ENCODE measurements at regions of chr22 and their contacts with region 1.

Region 1: GRCh38 chr22:17972385-17973181 is 51.8 kb downstream of the MICAL3 start:
- DNase-seq: no peak
- ATAC-seq: no peak
- H3K4me3 ChIP-seq: no peak overlapping the region
- H3K4me3 Mint-ChIP-seq: no peak overlapping the region
- H3K27ac ChIP-seq: peak overlapping the region in 1 of 2 donors; percentile 35
- H3K27ac Mint-ChIP-seq: peak overlapping the region; percentile 46
- H3K4me1 ChIP-seq: peaks cover 45 to 62% of the 10 kb centered on the region in 2 donors
- H3K4me1 Mint-ChIP-seq: peaks cover 79% of the 10 kb centered on the region
- H3K27me3 ChIP-seq: no peaks in the 10 kb centered on the region
- H3K27me3 Mint-ChIP-seq: no peaks in the 10 kb centered on the region
- CTCF ChIP-seq: no peak

Region 2: DNA sequence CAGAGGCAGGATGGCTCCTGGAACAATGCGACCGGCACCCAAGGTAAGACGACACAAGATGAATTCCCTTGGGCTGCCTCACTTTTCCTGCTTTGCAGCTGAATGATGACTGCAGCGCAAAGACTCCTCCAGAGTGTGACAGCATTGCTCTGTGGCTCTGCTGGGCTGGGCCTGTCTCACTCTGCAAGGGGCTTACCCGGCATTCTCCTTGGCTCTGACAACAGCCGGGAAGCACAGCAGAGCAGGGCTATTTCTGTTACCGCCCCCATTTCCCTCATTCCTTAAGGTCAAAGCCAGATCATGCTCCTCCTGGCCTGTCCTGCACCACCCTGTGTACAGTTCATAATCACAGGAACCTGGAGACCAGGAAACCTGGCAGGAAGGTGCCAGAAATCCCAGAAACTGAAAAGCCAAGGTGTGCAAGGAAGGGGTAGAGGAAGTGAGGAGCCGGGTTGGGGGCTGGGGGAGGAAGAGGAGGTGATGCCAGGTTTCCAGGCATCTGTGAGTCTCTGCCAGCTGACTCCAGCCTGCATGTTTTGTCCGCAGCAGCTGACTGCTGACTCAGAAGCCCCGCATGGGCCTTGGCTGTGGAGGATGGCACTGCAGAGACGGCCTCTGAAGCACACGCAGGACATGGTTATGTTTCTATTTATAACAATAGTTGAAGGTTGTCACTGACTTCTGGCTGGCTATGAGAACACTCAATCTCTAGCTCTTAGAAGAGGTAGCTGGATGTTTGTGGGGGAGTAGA is 61.8 kb before region 1 on chr22:
- CTCF ChIA-PET with region 1: no interaction called
- POLR2A ChIA-PET with region 1: no interaction called
- intact Hi-C with region 1: loop called (anchors 10 kb)
- DNase-seq: no peak
- ATAC-seq: no peak
- H3K4me3 ChIP-seq: no peak overlapping the region
- H3K4me3 Mint-ChIP-seq: no peak overlapping the region
- H3K27ac ChIP-seq: peak overlapping the region in 1 of 2 donors; percentile 37
- H3K27ac Mint-ChIP-seq: peak overlapping the region; percentile 11
- H3K4me1 ChIP-seq: peaks cover 0 to 25% of the 10 kb centered on the region in 2 donors
- H3K4me1 Mint-ChIP-seq: peaks cover 72% of the 10 kb centered on the region
- H3K27me3 ChIP-seq: no peaks in the 10 kb centered on the region
- H3K27me3 Mint-ChIP-seq: no peaks in the 10 kb centered on the region
- CTCF ChIP-seq: no peak

Region 3: GRCh38 chr22:17938484-17938924 is 34.1 kb before region 1 on chr22:
- CTCF ChIA-PET with region 1: no interaction called
- POLR2A ChIA-PET with region 1: no interaction called
- intact Hi-C with region 1: loop called (anchors 5 kb)
- DNase-seq: no peak
- ATAC-seq: no peak
- H3K4me3 ChIP-seq: no peak overlapping the region
- H3K4me3 Mint-ChIP-seq: no peak overlapping the region
- H3K27ac ChIP-seq: peak overlapping the region in 1 of 2 donors; percentile 16
- H3K27ac Mint-ChIP-seq: peak overlapping the region; percentile 57
- H3K4me1 ChIP-seq: peaks cover 50 to 54% of the 10 kb centered on the region in 2 donors
- H3K4me1 Mint-ChIP-seq: peaks cover 87% of the 10 kb centered on the region
- H3K27me3 ChIP-seq: no peaks in the 10 kb centered on the region
- H3K27me3 Mint-ChIP-seq: no peaks in the 10 kb centered on the region
- CTCF ChIP-seq: no peak

Region 4: DNA sequence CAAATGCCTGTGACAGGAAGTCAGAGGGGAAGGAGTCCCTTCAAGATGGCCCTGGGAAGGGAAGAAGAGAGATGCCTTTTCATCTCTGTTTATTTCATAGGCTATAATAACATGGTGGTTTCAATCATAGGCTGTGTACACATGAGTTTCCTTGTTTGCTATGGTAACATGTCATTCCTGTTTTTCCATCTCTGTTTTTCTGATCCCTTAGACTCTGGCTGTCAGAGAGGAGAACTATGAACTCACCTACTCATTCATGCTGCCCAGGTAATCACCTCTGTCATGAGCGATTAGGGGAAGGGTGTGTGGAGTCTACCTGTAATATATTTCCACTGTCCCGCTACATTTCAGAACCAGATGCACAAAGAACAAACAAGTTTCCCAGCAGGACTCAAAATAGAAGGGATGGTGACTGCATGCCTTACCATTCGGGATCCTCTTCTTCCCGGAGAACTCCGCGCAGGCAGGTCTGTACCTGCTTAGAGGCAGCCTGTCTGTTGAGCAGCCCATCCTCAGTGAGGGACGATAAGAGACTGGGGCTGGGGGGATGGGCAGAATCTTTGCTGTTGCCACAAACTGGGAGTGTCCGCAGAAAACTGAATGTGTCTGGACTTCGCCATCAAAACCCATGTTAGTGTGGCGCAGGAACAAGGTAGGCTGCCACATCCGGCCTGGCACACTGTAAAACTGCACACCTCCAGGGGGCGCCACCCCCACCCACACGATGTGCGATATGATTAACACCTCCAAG is 98.1 kb after region 1 on chr22:
- CTCF ChIA-PET with region 1: interaction called, 9 read pairs
- POLR2A ChIA-PET with region 1: interaction called, 11 read pairs
- intact Hi-C with region 1: no loop called
- DNase-seq: no peak
- ATAC-seq: no peak
- H3K4me3 ChIP-seq: no peak overlapping the region
- H3K4me3 Mint-ChIP-seq: peak overlapping the region; percentile 60
- H3K27ac ChIP-seq: no peak overlapping the region
- H3K27ac Mint-ChIP-seq: peak overlapping the region; percentile 65
- H3K4me1 ChIP-seq: peaks cover 58 to 66% of the 10 kb centered on the region in 2 donors
- H3K4me1 Mint-ChIP-seq: peaks cover 67% of the 10 kb centered on the region
- H3K27me3 ChIP-seq: no peaks in the 10 kb centered on the region
- H3K27me3 Mint-ChIP-seq: no peaks in the 10 kb centered on the region
- CTCF ChIP-seq: no peak